Endothelial cell of umbilical vein (primary cell): ENCODE measurements at regions of chr17 and their contacts with region 1.

Region 1: DNA sequence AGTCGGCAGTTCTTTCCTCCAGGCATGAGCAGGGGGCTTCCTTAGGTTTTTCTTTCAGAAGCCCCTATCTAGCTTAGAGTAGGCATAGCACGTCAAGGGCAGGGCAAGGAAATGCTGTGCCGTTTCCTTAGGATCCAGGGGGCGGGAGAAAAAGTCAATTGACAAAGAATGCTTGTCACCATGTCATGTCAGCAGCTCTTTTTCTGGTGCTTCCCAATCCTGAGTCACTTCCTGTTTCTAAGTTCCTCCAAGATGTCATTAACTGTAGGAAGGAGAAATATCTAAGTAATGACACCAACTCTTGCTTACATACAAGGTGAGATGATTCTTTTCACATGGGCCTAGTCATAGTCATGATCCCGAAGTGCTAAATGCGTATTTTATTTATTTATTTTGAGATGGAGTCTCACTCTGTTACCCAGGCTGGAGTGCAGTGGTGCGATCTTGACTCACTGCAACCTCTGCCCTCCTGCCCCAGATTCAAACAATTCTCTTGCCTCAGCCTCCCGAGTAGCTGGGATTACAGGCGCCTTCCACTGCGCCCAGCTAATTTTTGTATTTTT is 35.2 kb downstream of the GJC1 start:
- DNase-seq: peak; percentile 87
- H3K4me3 ChIP-seq: no peak overlapping the region
- H3K27ac ChIP-seq: peak overlapping the region; percentile 93
- H3K4me1 ChIP-seq: peaks cover 22% of the 10 kb centered on the region
- H3K27me3 ChIP-seq: no peaks in the 10 kb centered on the region
- CTCF ChIP-seq: no peak
- POLR2A ChIP-seq: no peak

Region 2: DNA sequence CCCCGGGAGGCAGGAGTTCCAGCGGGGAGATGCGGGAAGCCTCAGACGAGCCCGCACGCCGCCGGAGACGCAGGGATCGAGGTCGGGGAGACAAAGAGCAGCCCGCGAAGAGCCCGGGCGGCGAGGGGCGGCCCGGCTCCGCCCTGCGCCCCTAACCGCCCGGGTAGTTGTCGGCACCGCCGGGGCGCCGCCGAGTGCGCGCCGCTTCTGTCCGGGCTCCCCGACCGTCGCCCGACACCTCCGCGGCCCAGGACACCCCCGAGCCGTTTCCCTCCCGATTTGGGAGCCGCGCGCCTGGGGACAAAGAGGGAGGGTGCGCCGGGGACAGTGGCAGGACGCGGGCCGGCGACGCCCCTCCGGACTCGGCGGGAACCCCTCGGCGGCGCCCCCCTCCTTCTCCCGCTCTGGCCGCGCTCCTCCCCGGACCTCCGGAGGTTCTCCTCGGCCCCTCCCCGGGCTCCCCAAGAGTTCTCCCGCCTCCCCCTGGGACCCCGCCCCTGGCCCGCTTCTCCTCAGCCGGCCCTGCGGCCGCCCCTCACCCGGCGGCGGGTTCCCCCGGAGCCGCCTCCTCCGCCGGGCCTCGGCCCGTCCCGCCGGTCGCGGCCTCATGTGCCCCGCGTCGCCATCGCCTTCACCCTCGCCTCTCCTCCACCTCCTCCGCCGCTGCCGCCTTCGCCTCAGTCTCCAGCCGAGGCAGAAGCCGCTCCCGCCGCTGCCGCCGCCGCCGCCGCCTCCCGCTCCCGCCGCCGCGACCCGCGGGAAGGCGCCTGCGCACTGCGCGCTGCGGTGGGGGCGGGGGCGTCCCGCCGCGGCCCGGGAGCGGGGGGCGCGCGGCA is 34.8 kb after region 1 on chr17 and contains the start of gene GJC1:
- CTCF ChIA-PET with region 1: interaction called, 6 read pairs
- POLR2A ChIA-PET with region 1: interaction called, 3 read pairs
- dilution Hi-C with region 1: no loop called
- intact Hi-C with region 1: loop called (anchors 2 kb)
- DNase-seq: peak; percentile 58
- H3K4me3 ChIP-seq: peak within 1 kb of the TSS; percentile 85 to 98 (median 96)
- H3K27ac ChIP-seq: peak within 1 kb of the TSS; percentile 58
- H3K4me1 ChIP-seq: peaks cover 7% of the 10 kb centered on the region
- H3K27me3 ChIP-seq: no peaks in the 10 kb centered on the region
- CTCF ChIP-seq: no peak
- POLR2A ChIP-seq: peak; percentile 20
- total RNA-seq, gene GJC1: 35.9 and 39.7 TPM in 2 replicates